ENCODE measurements at regions of chr5 and their contacts with region 1.

Region 1: DNA sequence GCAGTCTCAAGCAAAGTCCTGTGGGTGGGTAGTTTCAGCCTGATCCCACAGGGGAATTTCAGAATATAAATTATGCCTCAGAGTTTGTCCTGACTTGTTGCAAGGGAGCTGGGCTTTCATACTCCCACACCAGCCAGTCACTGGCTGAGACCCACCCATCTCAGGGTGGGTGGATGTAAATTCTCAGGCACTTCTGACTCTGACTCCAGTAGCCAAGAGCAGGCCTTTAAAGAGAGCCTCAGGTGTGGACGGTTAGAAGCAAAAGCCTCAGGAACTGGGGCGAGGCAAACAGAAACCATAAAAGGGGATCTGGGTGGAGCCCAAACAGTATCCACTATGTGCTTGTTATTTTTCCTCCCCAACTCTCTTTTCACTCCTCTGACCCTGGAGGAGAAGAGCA is 28.6 kb upstream of the FBXW11 start:
- DNase-seq: no peak
- ATAC-seq: no peak

Region 2: DNA sequence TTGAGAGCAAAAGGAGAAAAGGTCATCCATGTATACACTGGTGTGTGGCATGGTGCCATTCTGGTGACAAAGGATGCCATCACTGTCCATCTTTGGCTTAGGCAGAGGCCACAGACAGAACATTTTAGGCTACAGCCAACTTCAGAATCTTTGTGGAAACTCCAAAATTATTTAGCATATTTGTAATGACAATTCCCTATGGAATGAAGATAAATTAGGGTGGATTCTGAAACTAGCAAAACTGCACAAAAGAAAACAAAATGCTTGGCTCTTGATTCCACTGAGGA is 121.1 kb before region 1 on chr5:
- intact Hi-C with region 1: loop called (anchors 2 kb)
- DNase-seq: no peak
- ATAC-seq: no peak

Region 3: GRCh38 chr5:172052450-172053236 is 17.6 kb after region 1 on chr5:
- intact Hi-C with region 1: no loop called
- DNase-seq: peak; percentile 86
- ATAC-seq: peak; percentile 96

Region 4: DNA sequence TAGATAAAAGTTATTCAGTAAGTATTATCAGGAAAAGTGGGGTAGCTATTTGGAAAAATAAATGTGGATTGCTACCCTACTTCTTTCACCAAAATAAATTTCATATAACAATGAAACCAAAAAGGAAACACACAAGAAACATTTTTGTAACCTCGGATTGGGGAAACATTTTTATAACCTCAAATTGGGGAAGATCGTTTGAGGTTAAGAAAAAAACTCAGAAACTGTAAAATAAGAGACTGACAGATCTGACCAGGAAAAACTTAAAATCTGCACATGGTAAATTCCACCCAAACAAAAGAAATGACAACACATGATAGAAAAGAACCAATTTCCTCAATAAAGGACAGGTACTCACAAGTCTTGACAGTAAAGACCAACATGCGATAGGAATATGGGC is 172.5 kb after region 1 on chr5:
- intact Hi-C with region 1: no loop called
- DNase-seq: no peak
- ATAC-seq: no peak

Region 5: DNA sequence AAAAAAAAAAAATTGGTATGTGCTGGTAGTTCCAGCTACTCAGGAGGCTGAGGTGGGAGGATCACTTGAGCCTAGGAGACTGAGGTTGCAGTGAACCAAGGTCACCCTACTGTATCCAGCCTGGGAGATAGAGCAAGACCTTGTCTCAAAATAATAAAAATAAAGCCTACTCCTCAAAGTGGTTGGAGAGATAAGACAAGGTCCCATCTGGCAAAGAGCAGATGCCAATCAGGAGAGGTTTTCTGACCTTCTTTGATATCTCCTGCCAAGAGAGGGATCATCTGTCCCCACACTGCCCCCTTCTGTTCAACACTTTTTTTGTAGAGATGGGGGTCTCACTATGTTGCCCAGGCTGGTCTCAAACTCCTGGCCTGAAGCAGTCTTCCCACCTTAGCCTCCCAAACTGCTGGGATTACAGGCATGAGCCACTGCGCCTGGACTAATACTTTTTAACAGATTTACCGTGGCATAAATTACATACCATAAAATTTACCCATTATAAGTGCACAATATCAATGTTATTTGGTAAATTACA is 354.6 kb after region 1 on chr5:
- intact Hi-C with region 1: no loop called
- DNase-seq: no peak
- ATAC-seq: no peak

Measured in Right ventricle myocardium superior (tissue), 1 donor.